Activated naive CD4-positive, alpha-beta T cell treated with anti-CD3 and anti-CD28 coated beads for 36 hours (primary cell): ENCODE measurements at regions of chr10 and their contacts with region 1.

Region 1: GRCh38 chr10:110067960-110068770 is 60.4 kb downstream of the ADD3 start:
- DNase-seq: peak; percentile 75
- H3K4me3 Mint-ChIP-seq: peak overlapping the region; percentile 56
- H3K27ac Mint-ChIP-seq: peak overlapping the region; percentile 91
- H3K4me1 Mint-ChIP-seq: peaks cover 82% of the 10 kb centered on the region
- H3K27me3 Mint-ChIP-seq: no peaks in the 10 kb centered on the region

Region 2: GRCh38 chr10:109914966-109915365 is 153.2 kb before region 1 on chr10:
- CTCF ChIA-PET with region 1: no interaction called
- intact Hi-C with region 1: loop called (anchors 2 kb)
- DNase-seq: peak; percentile 72
- H3K4me3 Mint-ChIP-seq: no peak overlapping the region
- H3K27ac Mint-ChIP-seq: peak overlapping the region; percentile 67
- H3K4me1 Mint-ChIP-seq: peaks cover 86% of the 10 kb centered on the region
- H3K27me3 Mint-ChIP-seq: no peaks in the 10 kb centered on the region